ENCODE measurements at regions of chr18 and their contacts with region 1.

Region 1: GRCh38 chr18:48934723-48935432 is 15.9 kb downstream of the SMAD7 start:
- DNase-seq: peak; percentile 83 to 94
- ATAC-seq: peak; percentile 92 to 94 (median 93)
- H3K4me3 ChIP-seq: peak overlapping the region; percentile 22
- H3K27ac ChIP-seq: peak overlapping the region; percentile 75
- H3K4me1 ChIP-seq: peaks cover 86% of the 10 kb centered on the region
- H3K27me3 ChIP-seq: no peaks in the 10 kb centered on the region
- CTCF ChIP-seq: no peak

Region 2: DNA sequence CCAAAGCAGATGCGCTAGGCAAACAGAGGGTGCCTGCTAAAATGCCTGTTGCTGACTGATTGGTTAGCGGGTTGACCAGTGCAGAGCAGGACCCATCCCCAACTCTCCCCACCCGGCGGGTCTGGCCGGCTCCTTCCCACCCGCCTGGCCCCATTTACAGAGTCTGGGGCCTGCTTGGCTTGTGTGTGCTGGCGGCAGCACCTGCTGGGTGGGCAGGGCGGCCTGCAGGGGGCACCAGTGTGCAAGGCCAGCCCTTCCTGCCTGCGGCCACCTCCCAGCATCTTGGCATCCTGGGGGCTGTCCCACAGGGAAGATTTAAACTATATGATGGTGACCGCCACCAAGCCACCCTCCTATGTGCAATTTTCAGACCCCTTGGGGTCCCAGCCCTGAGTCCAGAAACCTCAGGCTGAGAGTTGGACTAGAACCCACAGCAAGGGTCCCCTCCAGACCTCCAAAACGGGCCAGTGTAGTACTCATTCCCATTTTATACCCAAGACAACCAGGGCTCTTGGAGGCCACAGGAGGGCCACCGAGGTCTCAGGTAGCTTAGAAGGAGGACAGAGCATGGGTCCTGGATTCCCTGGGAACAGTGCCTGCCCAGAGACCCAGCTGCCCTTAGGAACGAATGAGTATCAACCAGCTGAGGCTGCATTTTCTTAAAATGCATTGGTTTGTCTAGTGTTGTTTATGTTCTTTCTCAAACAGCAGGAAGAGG is 157.7 kb before region 1 on chr18:
- intact Hi-C with region 1: loop called in 1 of 2 experiments (anchors 5 kb)
- DNase-seq: peak; percentile 63 to 81
- ATAC-seq: peak; percentile 62 to 69 (median 64)
- H3K4me3 ChIP-seq: no peak overlapping the region
- H3K27ac ChIP-seq: no peak overlapping the region
- H3K4me1 ChIP-seq: peaks cover 43% of the 10 kb centered on the region
- H3K27me3 ChIP-seq: no peaks in the 10 kb centered on the region
- CTCF ChIP-seq: peak; percentile 82

Region 3: GRCh38 chr18:48827291-48828193 is 107.3 kb before region 1 on chr18:
- intact Hi-C with region 1: loop called in 1 of 2 experiments (anchors 5 kb)
- DNase-seq: peak in 1 of 2 donors; percentile 39
- ATAC-seq: peak; percentile 32 to 78 (median 52)
- H3K4me3 ChIP-seq: peak overlapping the region; percentile 16
- H3K27ac ChIP-seq: peak overlapping the region; percentile 16
- H3K4me1 ChIP-seq: peaks cover 29% of the 10 kb centered on the region
- H3K27me3 ChIP-seq: no peaks in the 10 kb centered on the region
- CTCF ChIP-seq: no peak

Region 4: GRCh38 chr18:48975649-48976204 is 40.8 kb after region 1 on chr18:
- intact Hi-C with region 1: loop called in 1 of 2 experiments (anchors 1 kb)
- DNase-seq: peak; percentile 72 to 83
- ATAC-seq: peak; percentile 81 to 83 (median 82)
- H3K4me3 ChIP-seq: peak overlapping the region; percentile 79
- H3K27ac ChIP-seq: peak overlapping the region; percentile 90
- H3K4me1 ChIP-seq: no peaks in the 10 kb centered on the region
- H3K27me3 ChIP-seq: no peaks in the 10 kb centered on the region
- CTCF ChIP-seq: no peak